ENCODE measurements at regions of chr13 and their contacts with region 1.

Region 1: GRCh38 chr13:24443366-24443765 is 69.2 kb downstream of the PARP4 start:
- DNase-seq: no peak
- ATAC-seq: no peak
- H3K4me3 ChIP-seq: no peak overlapping the region
- H3K27ac ChIP-seq: no peak overlapping the region
- H3K4me1 ChIP-seq: no peaks in the 10 kb centered on the region
- H3K27me3 ChIP-seq: no peaks in the 10 kb centered on the region
- CTCF ChIP-seq: no peak
- POLR2A ChIP-seq: no peak
- RAD21 ChIP-seq: no peak

Region 2: DNA sequence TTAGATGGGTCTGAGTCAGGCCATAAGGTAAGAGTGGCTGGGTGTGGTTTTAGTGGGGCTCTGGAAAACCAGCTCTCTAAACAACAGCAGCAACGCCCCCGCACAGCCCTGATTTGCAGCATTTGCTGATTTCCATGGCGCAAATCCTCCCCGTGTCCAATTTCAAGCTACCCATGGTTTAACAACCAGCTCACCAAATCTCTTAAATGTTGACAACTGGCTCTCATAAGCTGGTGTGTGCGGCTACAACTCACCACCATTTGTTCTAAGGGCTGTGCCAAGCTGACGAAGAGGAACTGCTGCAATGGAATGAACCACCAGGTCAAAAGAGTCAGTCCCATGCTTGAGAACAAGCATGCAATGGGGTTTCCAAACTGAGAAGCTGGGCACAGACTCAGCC is 46.4 kb after region 1 on chr13:
- CTCF ChIA-PET with region 1: no interaction called
- POLR2A ChIA-PET with region 1: no interaction called
- RAD21 ChIA-PET with region 1: no interaction called
- intact Hi-C with region 1: loop called (anchors 10 kb)
- DNase-seq: no peak
- ATAC-seq: no peak
- H3K4me3 ChIP-seq: no peak overlapping the region
- H3K27ac ChIP-seq: no peak overlapping the region
- H3K4me1 ChIP-seq: no peaks in the 10 kb centered on the region
- H3K27me3 ChIP-seq: no peaks in the 10 kb centered on the region
- CTCF ChIP-seq: no peak
- POLR2A ChIP-seq: no peak
- RAD21 ChIP-seq: no peak

Measured in HCT116 (cell line).